ENCODE measurements at regions of chr1 and their contacts with region 1.

Region 1: DNA sequence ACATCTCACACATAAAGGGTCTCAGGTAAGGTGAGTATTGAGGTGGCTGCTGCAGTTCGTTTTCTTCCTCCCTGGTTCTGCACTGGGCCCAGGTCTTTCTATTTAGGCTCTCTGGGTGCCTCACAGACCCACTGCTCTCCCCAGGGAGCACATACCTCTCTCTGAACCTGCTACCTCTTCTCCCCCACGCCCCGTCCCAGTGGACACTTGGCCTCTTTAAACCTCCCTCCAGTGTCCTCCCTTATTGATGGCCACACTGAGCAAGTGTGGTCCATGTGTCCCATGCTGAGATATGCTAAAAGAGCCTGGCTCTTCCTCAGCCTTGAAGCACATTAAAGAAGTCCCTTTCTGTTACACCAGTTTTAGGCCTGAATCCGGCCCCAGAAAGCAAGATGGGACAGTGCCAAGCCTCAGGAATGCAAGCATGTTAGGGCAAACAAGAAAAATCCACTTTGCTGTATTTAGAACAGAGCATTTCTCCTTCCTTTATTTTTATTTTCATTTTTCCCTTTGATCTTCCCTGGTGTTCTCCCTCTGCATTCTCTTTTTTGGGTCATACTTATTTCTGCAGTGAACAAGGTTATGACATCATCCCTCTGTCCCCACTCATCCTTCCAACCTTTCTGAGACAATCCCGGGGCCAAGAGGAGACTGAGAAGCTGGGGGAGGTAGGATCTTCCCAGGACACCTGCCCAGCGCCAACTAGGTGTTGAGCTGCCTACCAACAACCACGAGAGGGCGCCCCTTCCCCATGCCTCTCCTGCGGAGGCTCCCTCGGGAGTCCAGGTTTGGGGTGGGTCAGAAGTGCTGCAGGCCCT is 5.0 kb upstream of the CHI3L2 start:
- DNase-seq: peak; percentile 59 to 90 (median 74)
- ATAC-seq: peak; percentile 21
- H3K4me3 ChIP-seq: peak overlapping the region; percentile 42
- H3K4me3 Mint-ChIP-seq: peak overlapping the region; percentile 85
- H3K27ac ChIP-seq: peak overlapping the region; percentile 70 to 88
- H3K27ac Mint-ChIP-seq: peak overlapping the region; percentile 98
- H3K4me1 ChIP-seq: peaks cover 91% of the 10 kb centered on the region
- H3K4me1 Mint-ChIP-seq: peaks cover 97% of the 10 kb centered on the region
- H3K27me3 ChIP-seq: no peaks in the 10 kb centered on the region
- H3K27me3 Mint-ChIP-seq: no peaks in the 10 kb centered on the region
- CTCF ChIP-seq: peak; percentile 93

Region 2: GRCh38 chr1:110963691-110964399 is 258.7 kb before region 1 on chr1 and contains the start of gene LRIF1:
- CTCF ChIA-PET with region 1: no interaction called
- POLR2A ChIA-PET with region 1: interaction called, 5 read pairs
- intact Hi-C with region 1: loop called in 1 of 2 experiments (anchors 5 kb)
- DNase-seq: peak; percentile 99 to 100 (median 100)
- ATAC-seq: peak; percentile 95
- H3K4me3 ChIP-seq: peak within 1 kb of the TSS; percentile 76
- H3K4me3 Mint-ChIP-seq: peak within 1 kb of the TSS; percentile 90
- H3K27ac ChIP-seq: peak within 1 kb of the TSS; percentile 94 to 100
- H3K27ac Mint-ChIP-seq: peak within 1 kb of the TSS; percentile 93
- H3K4me1 ChIP-seq: peaks cover 12% of the 10 kb centered on the region
- H3K4me1 Mint-ChIP-seq: peaks cover 36% of the 10 kb centered on the region
- H3K27me3 ChIP-seq: peaks cover 4 to 9% of the 10 kb centered on the region in 2 experiments
- H3K27me3 Mint-ChIP-seq: peaks cover 15% of the 10 kb centered on the region
- CTCF ChIP-seq: no peak
- total RNA-seq, gene LRIF1: 1.6 to 1.8 TPM

Region 3: DNA sequence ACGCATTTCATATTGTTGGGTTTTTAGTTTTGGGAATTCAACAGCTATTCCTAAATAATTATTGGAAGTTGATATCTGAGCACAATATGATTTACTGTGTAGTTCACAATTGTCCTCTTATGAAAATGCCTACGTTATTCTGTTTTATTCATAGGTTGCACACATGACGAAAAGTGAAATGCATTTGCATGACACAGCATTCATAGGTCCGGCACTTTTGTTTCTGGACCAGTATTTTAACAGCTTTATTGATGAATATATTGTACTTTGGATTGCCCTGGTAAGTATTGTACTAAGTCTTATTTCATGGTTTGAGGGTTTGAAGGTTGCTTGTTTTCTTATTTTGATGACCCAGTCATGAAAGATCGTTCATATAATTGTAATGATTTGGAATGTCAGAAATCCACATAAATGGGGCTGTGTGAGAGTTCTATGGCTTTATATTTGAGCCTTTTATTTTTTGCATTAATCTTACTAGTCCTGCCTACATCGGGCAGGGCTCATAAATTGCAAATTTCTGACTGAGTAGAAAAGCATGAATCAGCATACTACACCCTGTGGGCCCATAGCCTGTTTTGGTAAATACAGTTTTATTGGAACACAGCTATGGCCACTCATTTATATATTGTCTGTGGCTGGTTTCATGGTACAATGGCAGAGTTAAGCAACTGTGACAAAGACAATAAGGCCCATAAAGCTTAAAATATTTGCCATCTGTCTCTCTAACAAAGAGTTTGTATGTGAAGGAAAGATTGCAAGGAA is 39.0 kb before region 1 on chr1:
- CTCF ChIA-PET with region 1: no interaction called
- POLR2A ChIA-PET with region 1: interaction called, 125 read pairs
- intact Hi-C with region 1: loop called (anchors 5 kb)
- DNase-seq: no peak
- ATAC-seq: no peak
- H3K4me3 ChIP-seq: no peak overlapping the region
- H3K4me3 Mint-ChIP-seq: no peak overlapping the region
- H3K27ac ChIP-seq: no peak overlapping the region
- H3K27ac Mint-ChIP-seq: peak overlapping the region; percentile 86
- H3K4me1 ChIP-seq: peaks cover 19% of the 10 kb centered on the region
- H3K4me1 Mint-ChIP-seq: peaks cover 94% of the 10 kb centered on the region
- H3K27me3 ChIP-seq: no peaks in the 10 kb centered on the region
- H3K27me3 Mint-ChIP-seq: no peaks in the 10 kb centered on the region
- CTCF ChIP-seq: no peak

Region 4: GRCh38 chr1:111334169-111334568 is 111.7 kb after region 1 on chr1:
- CTCF ChIA-PET with region 1: interaction called, 20 read pairs
- POLR2A ChIA-PET with region 1: interaction called, 10 read pairs
- intact Hi-C with region 1: loop called (anchors 1 kb)
- DNase-seq: peak; percentile 37 to 85 (median 52)
- ATAC-seq: peak; percentile 95
- H3K4me3 ChIP-seq: no peak overlapping the region
- H3K4me3 Mint-ChIP-seq: no peak overlapping the region
- H3K27ac ChIP-seq: no peak overlapping the region
- H3K27ac Mint-ChIP-seq: no peak overlapping the region
- H3K4me1 ChIP-seq: peaks cover 8% of the 10 kb centered on the region
- H3K4me1 Mint-ChIP-seq: peaks cover 6% of the 10 kb centered on the region
- H3K27me3 ChIP-seq: no peaks in the 10 kb centered on the region
- H3K27me3 Mint-ChIP-seq: no peaks in the 10 kb centered on the region
- CTCF ChIP-seq: peak; percentile 81

Region 5: DNA sequence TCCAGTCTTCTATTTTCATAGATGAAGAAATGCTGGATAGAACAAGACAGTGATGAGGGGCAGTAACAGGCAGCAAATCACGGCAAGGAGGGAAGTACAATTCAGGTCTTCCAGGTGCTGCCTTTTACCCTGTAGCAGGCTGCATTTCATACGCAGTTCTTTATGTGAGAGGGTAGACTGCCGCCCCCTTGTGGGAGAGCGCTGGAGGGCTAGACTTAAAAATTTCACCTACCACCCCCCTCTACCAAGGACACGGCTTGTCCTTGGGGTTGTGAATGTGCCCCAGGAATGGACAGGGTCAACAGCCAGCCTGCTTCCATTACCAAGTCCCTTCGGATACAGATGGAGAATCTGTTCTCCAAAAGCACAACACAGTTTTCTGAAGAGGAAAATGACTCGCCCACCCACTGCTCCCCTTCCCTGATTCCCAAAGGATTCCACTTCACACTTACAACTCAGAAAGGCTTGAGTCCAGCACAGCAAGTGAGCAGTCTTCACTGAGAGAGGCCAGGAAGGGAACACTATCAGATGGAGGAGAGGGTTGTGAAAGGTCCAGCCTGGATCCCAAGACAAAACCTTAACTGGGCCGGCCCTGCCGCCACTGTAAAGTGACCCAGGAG is 219.2 kb after region 1 on chr1:
- CTCF ChIA-PET with region 1: interaction called, 5 read pairs
- POLR2A ChIA-PET with region 1: interaction called, 3 read pairs
- intact Hi-C with region 1: loop called (anchors 1 to 2 kb)
- DNase-seq: peak; percentile 58 to 83 (median 70)
- ATAC-seq: peak; percentile 98
- H3K4me3 ChIP-seq: no peak overlapping the region
- H3K4me3 Mint-ChIP-seq: no peak overlapping the region
- H3K27ac ChIP-seq: no peak overlapping the region
- H3K27ac Mint-ChIP-seq: peak overlapping the region; percentile 84
- H3K4me1 ChIP-seq: peaks cover 14% of the 10 kb centered on the region
- H3K4me1 Mint-ChIP-seq: peaks cover 54% of the 10 kb centered on the region
- H3K27me3 ChIP-seq: no peaks in the 10 kb centered on the region
- H3K27me3 Mint-ChIP-seq: no peaks in the 10 kb centered on the region
- CTCF ChIP-seq: peak; percentile 80

Region 6: DNA sequence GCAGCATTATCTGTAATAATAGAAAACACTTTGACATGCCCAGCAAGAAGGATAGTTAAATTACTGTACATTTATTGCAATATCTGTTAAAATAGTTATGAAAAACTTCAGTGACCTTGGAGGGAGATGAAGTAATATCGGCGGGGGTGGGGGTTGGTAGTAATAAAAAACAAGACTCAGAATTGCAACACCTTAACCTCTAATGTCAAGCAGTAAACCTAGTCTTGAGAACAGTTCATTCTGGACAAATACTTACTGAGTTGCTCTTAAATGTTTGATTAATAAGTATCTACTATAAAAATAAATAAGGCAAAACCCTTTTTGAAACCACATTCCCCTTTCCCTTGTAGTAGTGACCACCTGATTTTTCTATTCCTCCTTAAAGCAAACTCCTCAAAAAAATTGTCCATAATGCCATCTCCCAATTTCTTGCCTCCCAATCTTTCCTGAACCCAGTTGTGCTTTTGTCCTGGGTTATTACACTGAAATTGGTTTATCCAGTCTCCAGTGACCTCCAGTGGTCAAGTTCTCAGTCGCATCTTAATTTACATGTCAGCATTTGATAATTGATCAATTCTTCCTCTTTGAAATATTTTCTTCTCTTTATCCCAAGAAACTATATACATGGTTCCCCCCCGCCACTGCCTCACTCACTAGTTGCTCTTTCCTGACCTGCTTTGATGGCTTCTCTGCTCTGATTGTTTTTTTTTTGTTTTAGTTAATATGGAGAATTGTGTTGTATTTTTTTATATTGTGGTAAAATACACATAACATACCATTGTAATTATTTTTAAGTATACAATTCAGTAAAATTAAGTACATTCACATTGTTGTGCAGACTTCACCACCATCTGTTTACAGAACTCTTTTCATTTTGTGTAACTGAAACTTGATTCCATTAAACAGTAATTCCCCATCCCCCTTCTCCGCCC is 433.8 kb after region 1 on chr1:
- CTCF ChIA-PET with region 1: no interaction called
- POLR2A ChIA-PET with region 1: no interaction called
- intact Hi-C with region 1: loop called in 1 of 2 experiments (anchors 10 kb)
- DNase-seq: peak in 4 of 14 experiments; percentile 36 to 69 (median 57)
- ATAC-seq: no peak
- H3K4me3 ChIP-seq: no peak overlapping the region
- H3K4me3 Mint-ChIP-seq: peak overlapping the region; percentile 18
- H3K27ac ChIP-seq: no peak overlapping the region
- H3K27ac Mint-ChIP-seq: peak overlapping the region; percentile 13
- H3K4me1 ChIP-seq: peaks cover 30% of the 10 kb centered on the region
- H3K4me1 Mint-ChIP-seq: peaks cover 56% of the 10 kb centered on the region
- H3K27me3 ChIP-seq: no peaks in the 10 kb centered on the region
- H3K27me3 Mint-ChIP-seq: no peaks in the 10 kb centered on the region
- CTCF ChIP-seq: peak; percentile 64